H1 (cell line): ENCODE measurements at regions of chr6 and their contacts with region 1.

Region 1: GRCh38 chr6:52724406-52725121 is 38.7 kb downstream of the GSTA2 start:
- DNase-seq: peak; percentile 10 to 75
- H3K4me3 ChIP-seq: no peak overlapping the region
- H3K27ac ChIP-seq: no peak overlapping the region
- H3K4me1 ChIP-seq: no peaks in the 10 kb centered on the region
- H3K27me3 ChIP-seq: no peaks in the 10 kb centered on the region
- CTCF ChIP-seq: peak; percentile 90 to 96 (median 92)
- EP300 ChIP-seq: no peak
- POLR2A ChIP-seq: no peak
- RAD21 ChIP-seq: peak; percentile 71 to 82

Region 2: DNA sequence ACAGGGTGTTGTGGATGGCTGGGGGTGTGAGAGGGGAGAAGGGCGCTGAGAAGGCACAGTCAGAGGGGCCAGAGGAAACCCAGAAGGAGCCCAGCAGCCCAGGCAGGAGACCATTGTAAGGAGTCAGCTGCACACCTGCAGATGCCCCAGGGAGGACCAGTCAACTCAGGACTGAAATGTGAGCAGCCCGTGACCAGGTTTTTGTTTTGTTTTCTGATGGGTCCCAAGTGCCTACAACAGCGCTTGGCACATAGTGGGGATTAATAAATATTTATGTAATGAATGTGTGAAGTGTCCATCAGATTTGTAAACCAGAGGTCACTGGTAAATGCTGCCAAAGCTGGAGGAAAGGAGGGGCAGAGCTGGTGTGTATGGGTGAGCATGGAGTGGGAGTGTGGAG is 177.9 kb before region 1 on chr6:
- CTCF ChIA-PET with region 1: no interaction called
- POLR2A ChIA-PET with region 1: no interaction called
- DNase-seq: no peak
- H3K4me3 ChIP-seq: no peak overlapping the region
- H3K27ac ChIP-seq: no peak overlapping the region
- H3K4me1 ChIP-seq: peaks cover under 1 to 16% (median 8%) of the 10 kb centered on the region in 4 experiments
- H3K27me3 ChIP-seq: no peaks in the 10 kb centered on the region
- CTCF ChIP-seq: no peak
- EP300 ChIP-seq: no peak
- POLR2A ChIP-seq: no peak
- RAD21 ChIP-seq: no peak

Region 3: DNA sequence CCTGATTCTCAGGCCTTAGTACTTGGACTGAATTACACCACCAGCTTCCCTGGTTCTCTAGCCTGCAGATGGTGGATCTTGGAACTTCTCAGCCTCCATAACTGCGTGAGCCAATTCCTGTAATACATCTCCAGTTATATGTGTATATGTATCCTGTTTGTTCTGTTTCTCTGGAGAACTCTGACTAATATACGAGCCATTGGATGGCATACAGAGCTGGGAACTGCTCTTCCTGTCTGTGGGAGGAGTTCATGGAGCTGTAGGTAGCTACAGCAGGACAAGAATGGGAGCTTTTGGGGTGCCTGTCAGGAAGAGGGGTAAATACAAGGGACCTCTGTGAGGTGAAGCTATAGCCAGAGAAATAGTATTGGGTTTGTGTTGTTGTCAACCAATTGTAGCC is 12.4 kb before region 1 on chr6:
- CTCF ChIA-PET with region 1: interaction called, 20 read pairs
- POLR2A ChIA-PET with region 1: no interaction called
- DNase-seq: no peak
- H3K4me3 ChIP-seq: no peak overlapping the region
- H3K27ac ChIP-seq: no peak overlapping the region
- H3K4me1 ChIP-seq: no peaks in the 10 kb centered on the region
- H3K27me3 ChIP-seq: no peaks in the 10 kb centered on the region
- CTCF ChIP-seq: no peak
- EP300 ChIP-seq: no peak
- POLR2A ChIP-seq: no peak
- RAD21 ChIP-seq: no peak

Region 4: GRCh38 chr6:52802806-52803205 is 78.2 kb after region 1 on chr6:
- CTCF ChIA-PET with region 1: interaction called, 10 read pairs
- POLR2A ChIA-PET with region 1: no interaction called
- DNase-seq: no peak
- H3K4me3 ChIP-seq: no peak overlapping the region
- H3K27ac ChIP-seq: no peak overlapping the region
- H3K4me1 ChIP-seq: no peaks in the 10 kb centered on the region
- H3K27me3 ChIP-seq: no peaks in the 10 kb centered on the region
- CTCF ChIP-seq: no peak
- EP300 ChIP-seq: no peak
- POLR2A ChIP-seq: no peak
- RAD21 ChIP-seq: no peak